ENCODE measurements at regions of chr11 and their contacts with region 1.

Region 1: GRCh38 chr11:64878494-64879243 is at the start of gene EHD1:
- DNase-seq: peak; percentile 99 to 100 (median 100)
- H3K4me3 ChIP-seq: peak within 1 kb of the TSS; percentile 99
- H3K4me3 Mint-ChIP-seq: peak within 1 kb of the TSS; percentile 98 to 100 (median 99)
- H3K27ac ChIP-seq: peak within 1 kb of the TSS; percentile 86
- H3K27ac Mint-ChIP-seq: peak within 1 kb of the TSS; percentile 91 to 99 (median 98)
- H3K4me1 ChIP-seq: peaks cover 58% of the 10 kb centered on the region
- H3K4me1 Mint-ChIP-seq: peaks cover 59 to 67% (median 62%) of the 10 kb centered on the region in 3 donors
- H3K27me3 ChIP-seq: no peaks in the 10 kb centered on the region
- H3K27me3 Mint-ChIP-seq: peaks cover 0 to 10% of the 10 kb centered on the region in 2 donors
- total RNA-seq, gene EHD1: 102 to 110 TPM

Region 2: GRCh38 chr11:64894070-64894796 is 15.6 kb after region 1 on chr11:
- CTCF ChIA-PET with region 1: interaction called, 44 read pairs
- POLR2A ChIA-PET with region 1: interaction called, 3 read pairs
- DNase-seq: peak; percentile 82 to 93 (median 87)
- H3K4me3 ChIP-seq: no peak overlapping the region
- H3K4me3 Mint-ChIP-seq: no peak overlapping the region
- H3K27ac ChIP-seq: no peak overlapping the region
- H3K27ac Mint-ChIP-seq: peak overlapping the region in 2 of 8 donors; percentile 20 to 22
- H3K4me1 ChIP-seq: no peaks in the 10 kb centered on the region
- H3K4me1 Mint-ChIP-seq: peaks cover 0 to 4% (median 2%) of the 10 kb centered on the region in 3 donors
- H3K27me3 ChIP-seq: no peaks in the 10 kb centered on the region
- H3K27me3 Mint-ChIP-seq: no peaks in the 10 kb centered on the region